ENCODE measurements at regions of chr6 and their contacts with region 1.

Region 1: GRCh38 chr6:99495466-99495865 is 19.8 kb downstream of the USP45 start:
- DNase-seq: no peak
- CTCF ChIP-seq: no peak

Region 2: GRCh38 chr6:99485395-99485773 is 10.1 kb before region 1 on chr6:
- CTCF ChIA-PET with region 1: interaction called, 11 read pairs
- POLR2A ChIA-PET with region 1: no interaction called
- DNase-seq: no peak
- CTCF ChIP-seq: no peak

Measured in GM10248 (cell line).